CD4-positive, alpha-beta T cell (primary cell): ENCODE measurements at regions of chr14 and their contacts with region 1.

Region 1: DNA sequence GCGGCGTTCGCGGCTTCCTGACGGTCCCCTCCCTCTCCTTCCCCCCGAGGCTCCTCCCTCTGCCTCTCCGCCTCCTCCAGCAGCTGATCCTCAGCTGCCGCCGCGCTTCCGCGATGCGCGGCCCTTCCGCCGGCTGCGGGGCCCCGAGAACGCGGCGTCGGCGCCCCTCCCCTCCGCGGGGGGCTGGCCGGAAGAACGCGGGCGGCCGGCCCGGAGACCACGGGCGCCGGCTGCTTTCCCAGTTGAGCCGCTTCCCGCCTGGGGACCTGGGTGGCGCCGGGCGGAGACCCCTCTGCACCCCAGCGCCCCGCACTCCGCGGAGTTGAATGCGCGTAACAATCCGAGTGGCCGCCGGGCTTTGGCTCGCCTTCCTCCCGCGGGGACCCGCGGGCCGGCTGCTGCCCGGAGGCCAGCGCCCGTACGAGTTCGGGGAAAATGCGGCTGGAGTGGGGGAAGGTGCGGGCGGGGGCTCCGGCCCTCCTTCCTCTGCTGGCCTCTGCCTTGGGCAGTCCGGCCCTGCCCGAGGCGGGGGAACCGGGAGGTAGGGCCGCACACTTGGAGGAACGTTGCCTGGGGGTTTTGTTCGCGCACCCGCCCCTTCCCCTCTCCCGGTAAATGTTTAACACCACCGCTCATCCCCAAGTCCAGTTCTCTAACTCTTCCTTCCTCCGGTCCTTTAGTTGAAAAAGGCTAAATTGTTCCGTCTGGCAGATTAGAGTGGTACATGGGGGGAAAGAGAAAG is 383 bp upstream of the DCAF5 start:
- DNase-seq: peak; percentile 87 to 98 (median 93)
- ATAC-seq: peak; percentile 93
- H3K4me3 ChIP-seq: peak overlapping the region; percentile 98
- H3K4me3 Mint-ChIP-seq: peak overlapping the region; percentile 99
- H3K27ac ChIP-seq: peak overlapping the region; percentile 36 to 55
- H3K27ac Mint-ChIP-seq: peak overlapping the region; percentile 94
- H3K4me1 ChIP-seq: peaks cover 27% of the 10 kb centered on the region
- H3K4me1 Mint-ChIP-seq: peaks cover 36% of the 10 kb centered on the region
- H3K27me3 ChIP-seq: no peaks in the 10 kb centered on the region
- H3K27me3 Mint-ChIP-seq: peaks cover 3% of the 10 kb centered on the region
- CTCF ChIP-seq: no peak

Region 2: GRCh38 chr14:67816326-67817002 is 1336.8 kb before region 1 on chr14 and contains the start of gene ZFYVE26:
- CTCF ChIA-PET with region 1: no interaction called
- POLR2A ChIA-PET with region 1: no interaction called
- intact Hi-C with region 1: loop called in 1 of 2 experiments (anchors 5 kb)
- DNase-seq: peak; percentile 77 to 95 (median 82)
- ATAC-seq: peak; percentile 94
- H3K4me3 ChIP-seq: peak within 1 kb of the TSS; percentile 78
- H3K4me3 Mint-ChIP-seq: peak within 1 kb of the TSS; percentile 94
- H3K27ac ChIP-seq: peak within 1 kb of the TSS; percentile 67 to 74
- H3K27ac Mint-ChIP-seq: peak within 1 kb of the TSS; percentile 85
- H3K4me1 ChIP-seq: peaks cover 38% of the 10 kb centered on the region
- H3K4me1 Mint-ChIP-seq: peaks cover 68% of the 10 kb centered on the region
- H3K27me3 ChIP-seq: no peaks in the 10 kb centered on the region
- H3K27me3 Mint-ChIP-seq: no peaks in the 10 kb centered on the region
- CTCF ChIP-seq: no peak
- total RNA-seq, gene ZFYVE26: 20.5 to 23.2 TPM

Region 3: DNA sequence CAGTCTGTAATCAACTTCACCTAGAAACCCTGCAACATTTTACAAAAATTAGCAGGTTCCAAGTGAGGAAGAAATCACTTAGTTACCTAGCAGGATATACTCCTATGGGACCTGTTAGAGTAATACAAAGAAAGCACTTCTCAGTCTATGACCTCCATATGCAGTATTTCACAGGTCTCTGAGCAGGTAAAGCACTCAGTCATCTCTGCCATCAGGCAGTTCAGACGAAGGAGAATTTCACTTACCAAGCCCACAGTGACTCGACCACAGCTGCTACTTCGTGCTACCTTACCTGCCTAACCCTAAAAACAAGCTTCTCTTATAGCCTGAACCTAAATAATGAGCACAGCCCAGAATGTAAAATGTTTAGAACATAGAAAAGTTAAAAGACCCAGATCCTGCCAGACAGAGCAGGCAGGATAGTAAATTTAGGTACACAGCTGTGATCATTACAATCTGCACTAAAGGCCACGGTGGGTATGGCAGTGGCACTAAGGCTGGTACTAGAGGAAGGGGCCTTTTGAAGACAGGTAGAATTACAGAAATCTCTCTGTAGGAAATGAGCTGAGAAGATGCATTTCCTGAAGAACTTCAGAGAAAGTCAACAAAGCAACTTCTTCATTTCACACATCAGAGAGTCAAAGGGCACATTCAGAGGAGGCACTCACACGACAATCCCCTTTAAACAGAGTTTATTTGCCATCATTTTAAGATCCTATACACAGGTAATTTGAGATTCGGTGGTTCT is 36.1 kb before region 1 on chr14:
- CTCF ChIA-PET with region 1: no interaction called
- POLR2A ChIA-PET with region 1: no interaction called
- intact Hi-C with region 1: loop called in 1 of 2 experiments (anchors 5 kb)
- DNase-seq: peak in 3 of 14 experiments; percentile 3 to 20 (median 17)
- ATAC-seq: peak; percentile 86
- H3K4me3 ChIP-seq: no peak overlapping the region
- H3K4me3 Mint-ChIP-seq: peak overlapping the region; percentile 42
- H3K27ac ChIP-seq: no peak overlapping the region
- H3K27ac Mint-ChIP-seq: peak overlapping the region; percentile 77
- H3K4me1 ChIP-seq: peaks cover 14% of the 10 kb centered on the region
- H3K4me1 Mint-ChIP-seq: peaks cover 61% of the 10 kb centered on the region
- H3K27me3 ChIP-seq: no peaks in the 10 kb centered on the region
- H3K27me3 Mint-ChIP-seq: no peaks in the 10 kb centered on the region
- CTCF ChIP-seq: no peak

Region 4: DNA sequence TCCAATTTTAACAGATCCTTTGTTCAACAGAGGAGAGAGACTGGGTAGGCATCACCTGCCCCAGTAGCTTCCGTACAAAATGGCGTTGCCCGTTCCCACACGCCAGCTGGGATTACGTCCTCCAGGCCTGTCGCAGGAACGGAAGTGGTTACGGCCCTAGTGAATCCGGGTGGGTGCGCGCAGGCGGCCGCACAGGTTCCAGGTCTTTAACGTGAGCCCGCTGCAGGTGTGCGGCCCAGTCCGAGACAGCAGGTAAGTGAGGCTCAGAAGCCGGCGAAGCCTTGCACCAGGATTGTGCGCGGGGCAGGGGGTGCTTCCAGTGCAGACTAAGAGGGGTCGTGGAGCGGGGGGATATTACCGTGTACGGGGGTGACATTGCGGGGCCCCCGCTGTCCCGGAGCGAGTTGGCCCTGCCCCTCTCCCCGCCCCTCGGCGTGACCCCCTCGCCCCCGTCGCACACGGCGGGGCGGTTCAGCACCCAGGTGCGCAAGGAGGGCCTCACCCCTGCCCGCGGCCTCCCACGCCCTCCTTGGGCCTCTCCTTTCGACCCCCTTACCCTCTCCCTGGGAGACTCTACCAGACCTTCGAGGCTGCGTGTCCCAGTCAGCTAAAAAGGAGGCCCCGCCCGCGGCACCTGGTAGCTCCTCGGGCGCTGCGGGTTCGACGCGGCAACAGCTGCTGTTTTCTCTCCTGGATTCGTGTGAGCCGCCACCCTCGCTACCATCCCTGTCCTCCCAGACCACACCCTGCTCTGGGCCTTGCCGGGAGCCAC is 38.2 kb after region 1 on chr14 and contains the start of gene EXD2:
- CTCF ChIA-PET with region 1: interaction called, 7 read pairs
- POLR2A ChIA-PET with region 1: interaction called, 52 read pairs
- intact Hi-C with region 1: loop called (anchors 1 to 2 kb)
- DNase-seq: peak; percentile 47 to 85 (median 67)
- ATAC-seq: peak; percentile 76
- H3K4me3 ChIP-seq: peak within 1 kb of the TSS; percentile 86
- H3K4me3 Mint-ChIP-seq: peak within 1 kb of the TSS; percentile 97
- H3K27ac ChIP-seq: peak within 1 kb of the TSS; percentile 41 to 51
- H3K27ac Mint-ChIP-seq: peak within 1 kb of the TSS; percentile 95
- H3K4me1 ChIP-seq: peaks cover 14% of the 10 kb centered on the region
- H3K4me1 Mint-ChIP-seq: peaks cover 29% of the 10 kb centered on the region
- H3K27me3 ChIP-seq: no peaks in the 10 kb centered on the region
- H3K27me3 Mint-ChIP-seq: no peaks in the 10 kb centered on the region
- CTCF ChIP-seq: no peak
- total RNA-seq, gene EXD2: 6.6 to 7.0 TPM

Region 5: GRCh38 chr14:69398053-69398817 is 244.9 kb after region 1 on chr14 and contains the starts of genes ERH and SLC39A9:
- CTCF ChIA-PET with region 1: interaction called, 4 read pairs
- POLR2A ChIA-PET with region 1: interaction called, 33 read pairs
- intact Hi-C with region 1: loop called (anchors 2 kb)
- DNase-seq: peak; percentile 90 to 98 (median 93)
- ATAC-seq: peak; percentile 84
- H3K4me3 ChIP-seq: peak within 1 kb of the TSS; percentile 94
- H3K4me3 Mint-ChIP-seq: peak within 1 kb of the TSS; percentile 96
- H3K27ac ChIP-seq: peak within 1 kb of the TSS; percentile 82 to 92
- H3K27ac Mint-ChIP-seq: peak within 1 kb of the TSS; percentile 99
- H3K4me1 ChIP-seq: peaks cover 53% of the 10 kb centered on the region
- H3K4me1 Mint-ChIP-seq: peaks cover 85% of the 10 kb centered on the region
- H3K27me3 ChIP-seq: no peaks in the 10 kb centered on the region
- H3K27me3 Mint-ChIP-seq: no peaks in the 10 kb centered on the region
- CTCF ChIP-seq: no peak
- total RNA-seq, gene ERH: 87.0 to 96.3 TPM
- total RNA-seq, gene SLC39A9: 19.5 to 20.5 TPM

Region 6: GRCh38 chr14:69766984-69767368 is 613.7 kb after region 1 on chr14 and contains the start of gene SRSF5:
- CTCF ChIA-PET with region 1: no interaction called
- POLR2A ChIA-PET with region 1: interaction called, 11 read pairs
- intact Hi-C with region 1: no loop called
- DNase-seq: peak; percentile 89 to 97 (median 92)
- ATAC-seq: peak; percentile 78
- H3K4me3 ChIP-seq: peak within 1 kb of the TSS; percentile 97
- H3K4me3 Mint-ChIP-seq: peak within 1 kb of the TSS; percentile 100
- H3K27ac ChIP-seq: peak within 1 kb of the TSS; percentile 100
- H3K27ac Mint-ChIP-seq: peak within 1 kb of the TSS; percentile 100
- H3K4me1 ChIP-seq: peaks cover 53% of the 10 kb centered on the region
- H3K4me1 Mint-ChIP-seq: peaks cover 83% of the 10 kb centered on the region
- H3K27me3 ChIP-seq: no peaks in the 10 kb centered on the region
- H3K27me3 Mint-ChIP-seq: no peaks in the 10 kb centered on the region
- CTCF ChIP-seq: no peak
- total RNA-seq, gene SRSF5: 1,437 to 1,479 TPM

Region 7: GRCh38 chr14:70600382-70601157 is 1447.3 kb after region 1 on chr14 and contains the start of gene MED6:
- CTCF ChIA-PET with region 1: no interaction called
- POLR2A ChIA-PET with region 1: no interaction called
- intact Hi-C with region 1: loop called in 1 of 2 experiments (anchors 10 kb)
- DNase-seq: peak; percentile 83 to 97 (median 91)
- ATAC-seq: peak; percentile 99
- H3K4me3 ChIP-seq: peak within 1 kb of the TSS; percentile 97
- H3K4me3 Mint-ChIP-seq: peak within 1 kb of the TSS; percentile 100
- H3K27ac ChIP-seq: peak within 1 kb of the TSS; percentile 79 to 92
- H3K27ac Mint-ChIP-seq: peak within 1 kb of the TSS; percentile 99
- H3K4me1 ChIP-seq: peaks cover 15% of the 10 kb centered on the region
- H3K4me1 Mint-ChIP-seq: peaks cover 37% of the 10 kb centered on the region
- H3K27me3 ChIP-seq: no peaks in the 10 kb centered on the region
- H3K27me3 Mint-ChIP-seq: peaks cover 5% of the 10 kb centered on the region
- CTCF ChIP-seq: no peak
- total RNA-seq, gene MED6: 90.2 to 97.2 TPM